ENCODE measurements at regions of chr18 and their contacts with region 1.

Region 1: GRCh38 chr18:35972197-35973052 is at the start of gene RMP24:
- DNase-seq: peak; percentile 85 to 98 (median 94)

Region 2: DNA sequence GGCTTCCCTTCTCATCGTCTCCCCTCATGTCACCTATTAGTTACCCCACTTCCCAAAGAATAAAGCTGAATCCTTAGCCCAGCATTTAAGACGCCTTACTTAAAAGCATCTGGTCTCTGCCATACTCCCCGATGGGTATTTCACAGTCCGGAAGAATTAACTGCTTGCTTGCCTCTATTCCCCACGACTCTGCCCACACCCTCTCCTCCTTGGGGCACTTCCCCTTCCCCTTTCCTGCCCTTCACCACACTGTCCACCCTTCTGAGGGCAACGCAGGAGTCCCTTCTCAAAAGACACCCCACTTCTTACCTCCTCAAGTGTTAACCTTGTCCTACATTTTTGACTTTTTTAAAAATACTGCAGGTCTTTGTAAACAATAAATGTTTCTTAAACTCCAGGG is 60.1 kb before region 1 on chr18:
- intact Hi-C with region 1: no loop called
- DNase-seq: no peak

Region 3: DNA sequence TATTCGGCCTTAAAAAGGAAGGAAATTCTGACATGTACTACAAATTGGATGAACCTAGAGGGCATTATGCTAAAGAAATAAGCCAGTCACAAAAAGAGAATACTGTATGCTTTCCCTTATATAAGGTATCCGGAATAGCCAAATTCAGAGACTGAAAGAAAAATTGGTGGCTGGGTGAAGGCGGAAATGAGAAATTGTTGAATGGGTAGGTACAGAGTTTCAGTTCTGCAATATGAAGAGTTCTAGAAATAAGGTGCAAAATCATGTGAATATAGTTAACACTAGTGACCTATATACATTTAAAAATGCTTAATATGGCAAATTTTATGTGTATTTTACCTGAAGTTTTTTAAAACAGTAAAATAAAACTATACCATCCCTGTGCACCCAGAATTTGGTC is 43.2 kb after region 1 on chr18:
- intact Hi-C with region 1: no loop called
- DNase-seq: no peak

Region 4: DNA sequence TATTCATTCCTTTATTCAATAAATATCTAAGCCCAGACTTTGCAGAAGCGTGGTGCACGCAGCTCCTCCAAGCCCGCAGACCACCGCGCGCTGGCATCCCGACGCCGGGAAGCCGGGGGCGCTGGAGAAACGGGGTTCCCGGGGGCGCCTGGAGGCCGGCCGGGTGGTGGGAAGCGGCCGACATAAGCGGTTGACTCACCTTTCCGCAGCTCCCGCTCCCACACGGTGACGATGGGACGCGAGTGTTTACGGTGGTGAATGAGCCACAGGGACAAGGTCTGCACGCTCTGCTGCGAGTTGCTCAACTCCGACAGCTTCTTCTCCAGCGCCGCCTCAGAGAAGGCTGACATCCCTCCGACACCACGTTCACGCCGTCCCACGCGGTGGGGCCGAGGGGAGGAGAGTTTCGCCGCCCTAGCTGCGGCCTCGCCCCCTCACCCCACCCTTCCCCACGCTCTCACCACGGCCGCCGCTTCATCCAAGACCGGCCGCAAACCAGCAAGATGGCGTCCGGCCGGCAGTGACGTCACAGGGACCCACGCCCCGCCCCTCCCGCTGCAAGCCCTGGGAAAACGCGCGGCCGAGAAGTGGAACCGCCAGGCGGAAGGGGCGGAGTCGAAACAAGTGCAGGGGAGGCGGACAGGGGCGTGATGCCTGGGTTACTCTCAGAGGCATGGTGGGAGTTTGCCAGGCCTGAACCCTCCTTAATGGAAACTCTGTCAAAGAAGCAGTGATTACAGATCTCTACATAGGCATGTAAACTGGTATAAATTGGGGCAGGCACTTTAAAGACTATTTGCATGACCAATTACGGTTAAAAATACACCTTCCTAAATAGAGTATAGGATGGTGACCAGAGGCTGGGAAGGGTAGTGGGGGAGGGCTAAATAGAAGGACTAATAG is 94.9 kb after region 1 on chr18 and contains the start of gene RPRD1A:
- intact Hi-C with region 1: loop called (anchors 5 kb)
- DNase-seq: peak; percentile 96 to 100 (median 99)

Region 5: DNA sequence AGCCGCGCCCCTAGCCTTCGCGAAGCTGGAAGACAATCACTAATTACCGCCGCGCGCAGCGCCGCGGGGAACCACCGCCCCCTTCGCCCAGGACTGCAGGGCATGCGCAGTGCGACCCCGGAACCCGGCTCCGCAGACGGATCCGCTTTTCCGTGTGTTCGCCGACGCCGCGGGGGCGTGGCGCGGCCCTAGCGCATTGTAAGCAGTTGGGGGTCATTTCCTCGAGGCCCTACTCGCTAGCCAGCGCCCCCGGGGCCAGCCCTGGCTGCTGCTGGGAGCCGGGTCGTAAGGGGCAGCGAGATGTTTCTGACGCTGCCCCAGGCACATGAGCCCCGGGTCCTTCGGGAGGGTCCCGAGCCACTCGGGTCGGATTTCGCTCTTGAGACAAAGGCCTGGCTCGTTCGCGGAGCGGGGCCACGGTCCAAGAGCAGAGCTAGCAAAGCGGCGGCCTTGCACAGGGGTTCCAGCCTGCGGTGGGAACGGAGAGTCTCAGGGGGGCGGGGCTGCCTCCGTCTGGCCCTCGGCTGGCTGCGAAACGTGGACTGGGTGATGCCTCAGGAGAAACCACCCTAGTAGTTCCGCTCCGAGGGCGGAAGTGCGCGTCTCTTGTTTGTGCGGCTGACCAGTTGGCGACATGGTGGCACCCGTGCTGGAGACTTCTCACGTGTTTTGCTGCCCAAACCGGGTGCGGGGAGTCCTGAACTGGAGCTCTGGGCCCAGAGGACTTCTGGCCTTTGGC is 157.0 kb after region 1 on chr18 and contains the starts of genes ELP2 and SLC39A6:
- intact Hi-C with region 1: loop called (anchors 10 kb)
- DNase-seq: peak; percentile 93 to 99 (median 96)

Measured in head of caudate nucleus (tissue), 42 donors.